Astrocyte of the cerebellum (primary cell): ENCODE measurements at regions of chr17 and their contacts with region 1.

Region 1: DNA sequence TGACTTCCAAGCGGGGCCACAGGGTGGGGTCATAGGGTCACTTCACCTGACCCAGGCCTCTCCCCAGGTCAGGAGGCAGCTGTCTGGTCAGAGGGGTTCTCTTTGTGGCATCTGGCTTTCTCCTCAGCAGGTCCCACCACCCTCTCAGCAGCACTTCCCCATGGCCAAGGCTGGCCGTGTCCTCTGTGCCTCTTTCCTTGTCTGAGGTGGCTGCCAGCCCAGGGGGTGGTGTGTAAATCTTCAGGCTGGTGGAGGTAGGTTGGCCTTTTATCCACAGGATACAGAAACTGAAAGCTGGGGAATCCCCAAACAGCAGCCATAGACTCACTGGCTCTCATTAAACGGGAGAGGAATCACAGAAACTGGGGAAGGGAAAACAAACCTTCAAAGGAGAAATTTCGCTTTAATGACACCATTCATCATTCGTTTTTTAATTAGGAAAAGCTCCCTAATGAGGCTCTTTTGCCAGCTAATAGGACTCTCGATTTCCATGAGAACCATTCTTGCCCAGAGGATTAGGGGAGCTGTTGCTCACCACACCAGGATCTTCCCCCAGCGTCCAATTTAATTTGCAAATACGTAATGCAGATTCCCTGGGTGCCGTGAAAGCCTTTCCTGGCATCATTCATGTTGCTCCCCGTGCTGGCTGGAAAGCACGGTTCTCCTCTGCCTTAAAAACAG is 18.0 kb downstream of the C17orf75 start:
- DNase-seq: no peak
- H3K4me3 ChIP-seq: no peak overlapping the region
- CTCF ChIP-seq: no peak

Region 2: GRCh38 chr17:32222620-32223019 is 101.3 kb before region 1 on chr17:
- in situ Hi-C with region 1: loop called (anchors 5 kb)
- DNase-seq: no peak
- H3K4me3 ChIP-seq: no peak overlapping the region
- CTCF ChIP-seq: no peak